ENCODE measurements at regions of chr15 and their contacts with region 1.

Region 1: DNA sequence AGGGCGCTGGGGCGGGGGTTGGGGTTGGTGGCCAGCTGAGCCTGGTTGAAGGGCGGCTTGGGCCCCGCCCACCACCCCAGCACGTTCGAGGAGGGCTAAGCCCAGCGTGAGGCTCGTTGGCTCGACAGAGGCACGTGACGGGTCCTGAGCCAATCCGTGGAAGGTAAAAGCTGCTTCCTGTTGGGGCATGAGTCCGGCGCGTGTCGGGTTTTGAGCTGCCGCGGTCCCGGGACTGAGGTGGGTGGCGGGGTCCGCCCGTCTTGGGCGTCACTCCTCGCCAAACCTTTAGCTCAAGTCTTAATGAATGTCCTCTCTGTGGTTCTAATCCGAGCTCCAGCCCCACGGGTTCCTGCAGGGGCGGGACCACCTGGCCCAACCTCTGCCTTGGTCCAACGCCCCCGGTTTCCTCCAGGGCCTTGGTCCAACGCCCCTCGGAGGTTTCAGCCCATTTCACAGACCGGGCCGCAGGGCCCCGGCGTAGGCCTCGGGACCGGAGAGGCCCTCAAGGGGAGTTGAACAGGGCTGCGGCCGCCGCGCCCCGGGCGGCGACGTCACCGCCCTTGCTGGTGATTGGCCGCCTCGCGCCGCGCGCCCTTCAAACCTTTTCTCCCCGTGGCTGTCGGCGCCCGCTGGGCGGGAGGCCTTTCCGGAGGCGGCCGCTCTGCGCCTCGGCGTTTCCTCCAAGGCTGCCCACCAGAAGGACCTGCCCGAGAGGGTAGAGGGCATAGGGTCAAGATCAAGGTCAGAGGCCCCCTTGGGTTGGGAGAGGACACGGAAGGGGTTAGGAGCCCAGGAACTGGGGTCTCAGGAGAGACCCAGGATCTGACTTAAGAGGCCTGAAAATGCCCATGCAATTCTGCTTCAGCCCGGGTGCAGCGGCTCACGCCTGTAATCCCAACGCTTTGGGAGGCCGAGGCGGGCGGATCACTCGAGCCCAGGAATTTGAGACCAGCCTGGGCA is at the start of gene RCCD1:
- DNase-seq: peak; percentile 95
- ATAC-seq: peak; percentile 94
- H3K4me3 Mint-ChIP-seq: peak within 1 kb of the TSS; percentile 88
- H3K27ac Mint-ChIP-seq: peak within 1 kb of the TSS; percentile 97
- H3K4me1 Mint-ChIP-seq: peaks cover 22% of the 10 kb centered on the region
- H3K27me3 Mint-ChIP-seq: no peaks in the 10 kb centered on the region
- total RNA-seq, gene RCCD1: 30.1 to 31.9 TPM

Region 2: DNA sequence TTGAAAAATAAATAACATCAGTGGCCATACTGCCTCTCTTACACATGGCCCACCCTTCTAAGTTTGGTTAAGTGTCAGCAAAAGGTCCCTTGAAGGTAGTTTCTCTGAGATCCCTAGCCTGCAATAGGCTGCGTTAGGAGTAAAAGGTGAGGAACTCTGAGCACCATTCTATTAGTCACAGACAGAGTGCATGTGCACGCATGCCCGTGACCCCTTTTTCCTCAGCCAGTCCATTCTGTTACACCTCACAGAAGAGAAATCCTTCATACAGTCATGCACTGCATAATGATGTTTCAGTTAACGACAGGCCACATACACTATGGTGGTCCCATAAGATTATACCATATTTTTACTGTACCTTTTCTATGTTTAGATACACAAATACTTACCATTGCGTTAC is 12.2 kb after region 1 on chr15:
- CTCF ChIA-PET with region 1: interaction called, 18 read pairs
- POLR2A ChIA-PET with region 1: interaction called, 6 read pairs
- DNase-seq: no peak
- ATAC-seq: no peak
- H3K4me3 Mint-ChIP-seq: no peak overlapping the region
- H3K27ac Mint-ChIP-seq: no peak overlapping the region
- H3K4me1 Mint-ChIP-seq: no peaks in the 10 kb centered on the region
- H3K27me3 Mint-ChIP-seq: no peaks in the 10 kb centered on the region

Region 3: GRCh38 chr15:90994059-90994416 is 39.0 kb after region 1 on chr15:
- CTCF ChIA-PET with region 1: interaction called, 12 read pairs
- POLR2A ChIA-PET with region 1: interaction called, 6 read pairs
- DNase-seq: no peak
- ATAC-seq: peak; percentile 34
- H3K4me3 Mint-ChIP-seq: peak overlapping the region; percentile 100
- H3K27ac Mint-ChIP-seq: peak overlapping the region; percentile 100
- H3K4me1 Mint-ChIP-seq: peaks cover 41% of the 10 kb centered on the region
- H3K27me3 Mint-ChIP-seq: no peaks in the 10 kb centered on the region

Region 4: DNA sequence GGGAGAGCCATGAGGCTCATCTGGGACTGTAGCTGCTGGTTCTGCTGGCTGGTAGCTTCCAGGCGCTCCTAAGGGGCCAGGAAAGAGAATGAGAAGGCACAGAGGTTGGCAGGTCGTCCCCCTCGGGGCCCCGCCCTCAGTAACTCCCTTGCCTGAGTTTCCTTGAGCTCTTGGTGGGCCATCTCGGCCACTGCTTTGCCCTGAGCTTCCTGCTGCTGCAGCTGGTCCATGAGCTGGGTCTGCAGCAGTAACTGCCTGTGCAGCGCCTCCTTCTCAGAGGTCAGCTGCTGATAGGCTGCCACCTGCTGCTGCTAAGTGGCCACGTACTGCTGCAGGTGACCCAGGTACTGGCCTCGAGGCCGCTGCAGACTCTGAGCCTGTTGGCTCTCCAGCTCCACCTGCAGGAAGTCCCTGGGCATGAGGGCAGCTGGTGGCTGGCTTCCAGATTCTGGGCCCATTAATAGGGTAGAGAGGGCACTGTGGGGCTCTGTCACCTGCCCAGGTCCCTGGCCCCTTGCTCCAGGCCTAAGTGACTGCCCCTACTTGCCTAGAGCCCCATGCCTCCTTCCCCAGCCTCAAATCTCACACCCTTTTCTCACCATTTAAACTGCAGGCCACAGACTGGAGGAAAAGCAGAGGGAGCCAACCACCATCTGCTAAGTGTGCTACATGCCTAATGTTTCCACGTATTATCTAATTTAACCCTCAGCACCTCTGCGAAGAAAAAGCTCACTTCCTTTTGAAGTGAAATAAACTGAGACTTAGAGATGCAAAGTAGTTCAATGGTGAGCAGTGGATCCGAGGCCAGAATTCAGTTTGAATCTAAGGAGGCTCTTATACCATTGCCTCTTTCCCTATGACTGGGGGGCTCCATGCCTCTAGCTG is 78.2 kb after region 1 on chr15:
- CTCF ChIA-PET with region 1: interaction called, 36 read pairs
- POLR2A ChIA-PET with region 1: no interaction called
- DNase-seq: peak; percentile 75
- ATAC-seq: peak; percentile 87
- H3K4me3 Mint-ChIP-seq: no peak overlapping the region
- H3K27ac Mint-ChIP-seq: no peak overlapping the region
- H3K4me1 Mint-ChIP-seq: peaks cover 4% of the 10 kb centered on the region
- H3K27me3 Mint-ChIP-seq: peaks cover 12% of the 10 kb centered on the region

Region 5: GRCh38 chr15:91098444-91098843 is 143.5 kb after region 1 on chr15:
- CTCF ChIA-PET with region 1: no interaction called
- POLR2A ChIA-PET with region 1: no interaction called
- DNase-seq: no peak
- ATAC-seq: no peak
- H3K4me3 Mint-ChIP-seq: no peak overlapping the region
- H3K27ac Mint-ChIP-seq: no peak overlapping the region
- H3K4me1 Mint-ChIP-seq: peaks cover 16% of the 10 kb centered on the region
- H3K27me3 Mint-ChIP-seq: peaks cover 67% of the 10 kb centered on the region

Region 6: DNA sequence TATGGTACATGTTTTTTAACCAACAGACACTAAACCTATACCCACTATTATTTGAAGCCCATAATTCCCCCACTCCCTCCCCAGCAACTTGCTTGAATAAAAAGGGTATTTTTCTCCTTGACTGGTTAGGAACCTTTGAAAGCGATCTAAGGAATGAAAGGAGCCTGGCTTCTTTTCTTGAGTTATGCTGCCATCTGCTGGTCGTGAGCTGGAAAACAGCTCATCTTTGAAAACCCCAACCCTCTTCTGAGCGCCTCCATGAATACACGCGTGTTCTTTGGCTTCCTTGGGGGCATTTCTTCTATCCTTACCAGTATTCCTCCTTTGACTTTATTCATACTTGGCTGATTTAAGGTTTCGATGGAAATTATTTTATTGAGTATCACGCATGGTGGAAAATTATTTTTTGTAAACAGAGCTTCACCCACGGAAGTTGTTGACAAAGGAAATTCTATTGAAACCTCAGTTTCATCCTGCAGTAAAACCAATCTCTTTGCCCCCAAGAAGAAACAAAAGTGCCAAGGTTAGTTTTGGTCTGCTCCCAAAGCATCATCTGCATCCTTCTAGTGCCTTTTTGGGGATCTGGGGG is 316.7 kb after region 1 on chr15:
- CTCF ChIA-PET with region 1: interaction called, 35 read pairs
- POLR2A ChIA-PET with region 1: no interaction called
- DNase-seq: peak; percentile 74
- ATAC-seq: no peak
- H3K4me3 Mint-ChIP-seq: peak overlapping the region; percentile 49
- H3K27ac Mint-ChIP-seq: no peak overlapping the region
- H3K4me1 Mint-ChIP-seq: peaks cover 11% of the 10 kb centered on the region
- H3K27me3 Mint-ChIP-seq: peaks cover 31% of the 10 kb centered on the region